ENCODE measurements at regions of chr5 and their contacts with region 1.

Region 1: DNA sequence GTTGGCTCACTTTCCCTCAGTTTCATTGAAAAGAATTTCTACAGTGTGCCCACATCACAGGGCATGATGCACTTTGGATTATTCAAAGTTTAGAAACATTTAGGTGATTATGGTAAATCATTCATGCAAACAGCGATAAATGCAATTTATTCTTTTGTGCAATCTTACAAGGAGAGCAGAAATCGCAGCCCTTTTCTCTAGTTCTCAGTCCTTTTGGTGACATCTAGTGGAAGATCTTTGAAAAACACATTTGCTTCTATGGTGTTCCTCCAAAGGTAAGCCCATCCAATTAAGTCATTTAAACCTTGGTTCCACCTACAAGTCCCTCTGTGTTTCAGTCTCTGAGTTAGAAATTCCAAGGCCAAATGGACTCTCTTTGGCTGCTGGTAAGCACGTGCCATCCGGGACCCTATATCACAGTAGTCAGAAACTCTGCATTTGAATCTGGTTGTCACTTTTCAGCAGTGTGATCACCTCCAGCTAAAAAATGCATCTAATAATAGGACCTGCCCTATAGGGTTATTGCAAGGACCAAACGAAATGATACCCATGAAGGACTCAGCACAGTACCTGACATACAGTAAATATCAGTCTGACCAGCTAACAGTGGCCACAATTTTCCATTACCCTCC is 66.4 kb downstream of the MACROH2A1 start:
- DNase-seq: no peak
- H3K4me3 ChIP-seq: no peak overlapping the region
- H3K27ac ChIP-seq: no peak overlapping the region
- H3K4me1 ChIP-seq: no peaks in the 10 kb centered on the region
- H3K27me3 ChIP-seq: no peaks in the 10 kb centered on the region
- CTCF ChIP-seq: peak; percentile 34 to 60 (median 37)

Region 2: DNA sequence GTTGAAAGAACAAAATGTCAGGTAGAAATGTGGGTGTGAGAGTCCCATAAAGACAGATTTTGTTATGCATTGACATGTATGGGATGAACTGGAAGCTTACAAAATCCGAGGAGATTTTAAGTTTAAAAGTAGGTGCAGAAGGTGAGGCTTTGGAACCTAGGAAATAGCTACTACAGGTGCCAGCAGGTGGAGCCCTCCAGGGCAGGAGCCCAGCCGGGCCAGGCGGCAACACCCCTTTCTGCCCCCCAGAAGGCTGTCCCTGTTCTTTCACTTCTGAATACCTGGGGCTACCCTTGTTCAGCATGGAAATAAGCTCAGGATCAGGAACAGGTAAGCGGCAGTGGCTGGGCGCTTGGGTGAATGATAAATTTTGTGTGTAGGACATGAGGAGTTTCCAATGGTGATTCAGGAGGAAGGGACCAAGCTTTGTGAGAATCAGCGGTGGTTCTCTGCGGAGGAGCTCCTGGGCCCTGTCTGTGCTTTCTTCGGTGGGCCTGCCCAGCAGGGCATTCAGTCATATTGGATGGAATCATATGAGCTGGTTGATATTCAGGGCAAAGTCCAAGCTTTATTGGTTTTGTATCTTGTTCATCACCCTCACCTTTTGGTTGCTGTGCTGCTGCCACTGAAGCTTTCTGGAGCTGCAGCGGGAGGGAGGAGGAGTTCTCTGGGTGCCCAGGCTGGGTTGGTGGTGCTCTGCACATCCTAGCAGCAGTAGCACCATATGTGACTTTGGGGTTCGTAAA is 415.4 kb before region 1 on chr5:
- intact Hi-C with region 1: loop called (anchors 10 kb)
- DNase-seq: no peak
- H3K4me3 ChIP-seq: no peak overlapping the region
- H3K27ac ChIP-seq: no peak overlapping the region
- H3K4me1 ChIP-seq: no peaks in the 10 kb centered on the region
- H3K27me3 ChIP-seq: no peaks in the 10 kb centered on the region
- CTCF ChIP-seq: peak in 1 of 3 experiments; percentile 14

Region 3: GRCh38 chr5:135013947-135014570 is 318.6 kb before region 1 on chr5:
- intact Hi-C with region 1: loop called (anchors 10 kb)
- DNase-seq: peak in 1 of 2 donors; percentile 69
- H3K4me3 ChIP-seq: no peak overlapping the region
- H3K27ac ChIP-seq: peak overlapping the region; percentile 37 to 55
- H3K4me1 ChIP-seq: peaks cover 0 to 14% of the 10 kb centered on the region in 2 donors
- H3K27me3 ChIP-seq: no peaks in the 10 kb centered on the region
- CTCF ChIP-seq: no peak

Region 4: DNA sequence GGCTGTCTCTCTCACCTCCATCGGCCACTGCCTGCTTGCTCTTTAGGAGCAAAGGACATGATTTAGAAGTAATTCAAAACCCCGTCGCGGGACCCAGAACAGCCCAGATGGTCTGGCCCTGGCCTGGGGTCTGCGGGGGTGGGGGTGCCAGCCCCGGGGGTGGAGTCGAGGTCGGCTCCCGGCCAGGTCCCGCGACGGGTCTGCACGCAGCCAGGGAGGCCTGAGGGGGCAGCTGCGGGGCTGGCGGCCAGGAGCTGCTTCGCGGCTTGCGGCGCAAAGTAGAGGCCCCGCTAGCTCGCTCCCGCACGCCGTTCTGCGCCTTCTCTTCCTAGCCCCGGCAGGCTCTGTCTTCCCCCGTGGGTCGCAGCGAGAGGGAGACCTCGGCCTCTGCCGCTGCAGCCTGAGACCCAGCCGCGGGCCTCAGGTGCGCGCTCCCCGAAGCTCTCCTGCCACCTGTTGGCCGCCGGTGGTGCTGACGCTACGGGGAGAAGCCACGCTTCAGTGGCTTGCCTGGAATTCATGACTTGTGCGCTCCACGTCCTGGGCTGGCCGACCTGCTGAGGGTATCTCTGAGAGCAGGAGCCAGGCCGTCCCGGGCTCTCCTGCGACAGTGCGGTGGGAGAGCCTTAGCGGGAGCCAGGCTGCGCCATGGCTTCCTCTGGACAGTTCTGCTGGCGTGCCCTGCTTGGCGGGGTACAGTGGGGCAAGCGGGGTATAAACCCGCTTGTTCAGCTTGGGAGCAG is 141.4 kb before region 1 on chr5:
- intact Hi-C with region 1: loop called (anchors 1 kb)
- DNase-seq: peak in 1 of 2 donors; percentile 84
- H3K4me3 ChIP-seq: peak overlapping the region; percentile 66 to 71
- H3K27ac ChIP-seq: no peak overlapping the region
- H3K4me1 ChIP-seq: peaks cover 3 to 9% of the 10 kb centered on the region in 2 donors
- H3K27me3 ChIP-seq: no peaks in the 10 kb centered on the region
- CTCF ChIP-seq: peak; percentile 84 to 98 (median 93)

Region 5: DNA sequence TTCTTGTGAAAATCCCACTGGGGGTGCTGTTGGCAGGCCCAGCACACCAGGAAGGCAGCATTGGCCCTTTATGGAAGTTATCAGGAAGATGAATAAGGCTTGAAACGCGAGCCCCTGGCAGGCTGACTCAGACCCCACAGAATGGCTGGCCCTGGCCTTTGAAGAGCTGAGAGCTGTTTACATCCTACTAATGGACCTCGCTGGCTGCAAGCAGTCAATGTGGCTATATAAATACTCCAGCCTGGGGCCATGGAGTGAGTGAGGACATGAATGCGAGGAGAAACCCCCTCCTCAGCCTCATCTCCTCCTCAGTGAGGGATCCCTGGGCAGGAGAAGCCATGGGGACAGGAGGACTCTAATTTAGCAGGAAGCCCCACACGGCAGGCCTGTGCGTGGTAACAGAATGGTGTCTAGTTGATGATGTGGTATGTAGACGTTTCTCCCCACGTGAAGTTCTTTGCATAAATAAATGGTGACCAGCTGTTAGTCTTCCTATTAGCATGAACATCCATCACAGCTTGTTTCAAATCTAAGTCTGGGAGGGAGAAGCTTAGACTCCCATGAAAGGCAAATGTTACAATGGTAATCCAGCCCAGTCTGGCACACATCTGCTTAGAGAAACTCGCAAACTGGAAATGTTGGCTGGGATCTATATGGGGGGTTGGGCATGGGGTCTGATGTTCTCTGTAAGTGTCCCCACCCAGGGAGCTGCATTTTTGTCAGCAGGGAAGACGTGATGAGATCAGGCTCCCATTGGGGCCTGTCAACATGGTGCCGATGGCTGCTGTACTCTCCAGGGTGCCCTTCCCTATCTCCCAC is 123.5 kb before region 1 on chr5:
- intact Hi-C with region 1: loop called (anchors 5 kb)
- DNase-seq: peak; percentile 67 to 92
- H3K4me3 ChIP-seq: no peak overlapping the region
- H3K27ac ChIP-seq: peak overlapping the region; percentile 72 to 84
- H3K4me1 ChIP-seq: peaks cover 11 to 33% of the 10 kb centered on the region in 2 donors
- H3K27me3 ChIP-seq: no peaks in the 10 kb centered on the region
- CTCF ChIP-seq: peak in 1 of 3 experiments; percentile 30

Region 6: GRCh38 chr5:135456238-135457099 is 123.8 kb after region 1 on chr5:
- intact Hi-C with region 1: no loop called
- DNase-seq: peak; percentile 68 to 74
- H3K4me3 ChIP-seq: no peak overlapping the region
- H3K27ac ChIP-seq: no peak overlapping the region
- H3K4me1 ChIP-seq: peaks cover 3 to 16% of the 10 kb centered on the region in 2 donors
- H3K27me3 ChIP-seq: no peaks in the 10 kb centered on the region
- CTCF ChIP-seq: no peak

Region 7: GRCh38 chr5:135662683-135663082 is 330.0 kb after region 1 on chr5:
- intact Hi-C with region 1: no loop called
- DNase-seq: no peak
- H3K4me3 ChIP-seq: no peak overlapping the region
- H3K27ac ChIP-seq: no peak overlapping the region
- H3K4me1 ChIP-seq: no peaks in the 10 kb centered on the region
- H3K27me3 ChIP-seq: no peaks in the 10 kb centered on the region
- CTCF ChIP-seq: no peak

Measured in ascending aorta (tissue), 2 donors.